Transverse colon (tissue), 4 donors: ENCODE measurements at regions of chr11 and their contacts with region 1.

Region 1: DNA sequence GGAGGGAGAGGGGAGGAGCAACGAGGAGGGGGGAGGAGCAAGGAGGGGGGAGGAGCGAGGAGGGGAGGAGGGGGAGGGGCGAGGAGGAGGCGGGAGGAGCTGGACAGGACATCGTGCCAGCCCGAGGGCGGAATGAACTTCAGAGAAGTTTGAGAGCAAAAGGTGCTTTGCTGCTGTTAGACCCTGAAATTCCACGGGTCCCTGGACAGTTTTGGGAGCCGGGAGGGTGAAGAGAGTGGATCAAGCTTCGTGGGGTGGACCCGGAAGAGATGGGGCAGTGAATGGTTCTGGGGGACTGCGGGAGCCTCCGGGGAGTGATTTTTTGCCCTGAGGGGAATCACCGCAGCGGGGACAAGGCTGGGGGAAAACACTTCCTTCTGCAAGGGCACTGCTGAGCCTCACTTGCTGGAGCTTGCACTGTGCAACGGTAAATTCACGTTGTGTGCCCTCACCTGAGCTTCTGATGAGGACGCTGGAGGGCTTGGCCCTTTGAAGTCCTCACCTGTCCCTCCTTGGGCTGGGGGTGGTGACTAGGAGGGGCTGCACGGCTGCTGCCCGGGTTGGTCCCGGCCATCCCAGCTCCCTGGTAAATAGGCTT is 10.6 kb upstream of the NLRP6 start:
- DNase-seq: peak; percentile 75
- H3K4me3 ChIP-seq: peak overlapping the region; percentile 16 to 38 (median 23)
- H3K27ac ChIP-seq: peak overlapping the region; percentile 79 to 86 (median 84)
- H3K4me1 ChIP-seq: peaks cover 0 to 22% (median 18%) of the 10 kb centered on the region in 4 donors
- H3K27me3 ChIP-seq: peaks cover 7% of the 10 kb centered on the region
- CTCF ChIP-seq: no peak
- EP300 ChIP-seq: no peak
- POLR2A ChIP-seq: peak; percentile 52

Region 2: DNA sequence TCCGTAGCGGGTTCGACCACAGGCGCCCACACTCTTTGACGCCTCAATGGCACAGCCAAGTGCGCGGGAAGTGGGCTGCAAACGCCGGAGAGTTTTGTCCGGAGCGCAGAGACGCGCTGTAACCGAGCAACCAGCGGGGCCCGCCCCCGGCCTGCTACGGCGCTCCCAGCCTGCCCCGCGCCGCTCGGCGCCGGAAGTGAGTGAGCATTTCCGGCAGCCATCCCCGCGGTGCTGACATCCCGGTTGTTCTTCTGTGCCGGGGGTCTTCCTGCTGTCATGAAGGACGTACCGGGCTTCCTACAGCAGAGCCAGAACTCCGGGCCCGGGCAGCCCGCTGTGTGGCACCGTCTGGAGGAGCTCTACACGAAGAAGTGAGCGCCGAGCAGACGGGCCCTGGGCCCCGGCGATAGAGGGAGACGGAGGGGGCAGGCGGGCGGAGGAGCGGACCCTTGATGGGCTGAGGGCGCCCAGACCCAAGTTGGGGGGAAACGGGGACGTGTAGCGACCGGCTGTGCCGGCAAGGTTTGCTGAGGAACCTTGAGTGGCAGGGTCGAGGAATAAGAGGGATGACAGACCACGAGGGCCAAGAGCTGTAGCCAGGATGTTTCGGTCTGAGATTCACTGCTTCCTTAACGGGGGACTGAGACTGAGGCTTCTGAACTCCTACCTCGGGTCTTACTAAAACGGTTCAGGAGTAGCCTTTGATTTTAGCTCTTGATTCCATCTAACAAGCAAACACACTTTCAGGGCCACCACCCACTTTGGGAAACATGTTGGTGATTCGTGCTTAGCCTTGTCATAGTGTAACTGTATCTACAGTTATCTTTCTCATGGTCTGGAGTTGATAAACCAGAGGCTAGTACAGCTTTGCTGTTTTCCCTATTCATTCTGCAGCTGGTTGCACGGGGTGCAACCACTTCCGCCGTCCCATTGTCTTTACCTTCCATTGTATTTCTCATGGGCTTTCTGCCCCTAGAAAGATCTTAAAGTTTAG is 30.5 kb before region 1 on chr11 and contains the start of gene PSMD13:
- in situ Hi-C with region 1: no loop called
- intact Hi-C with region 1: no loop called
- DNase-seq: peak; percentile 89
- H3K4me3 ChIP-seq: peak within 1 kb of the TSS; percentile 68 to 100 (median 92)
- H3K27ac ChIP-seq: peak within 1 kb of the TSS; percentile 94 to 99 (median 98)
- H3K4me1 ChIP-seq: peaks cover 17 to 28% (median 19%) of the 10 kb centered on the region in 4 donors
- H3K27me3 ChIP-seq: no peaks in the 10 kb centered on the region
- CTCF ChIP-seq: peak in 2 of 5 experiments; percentile 29 to 44
- EP300 ChIP-seq: no peak
- POLR2A ChIP-seq: peak; percentile 71
- total RNA-seq, gene PSMD13: 23.2 to 96.5 (median 52.2) TPM

Region 3: DNA sequence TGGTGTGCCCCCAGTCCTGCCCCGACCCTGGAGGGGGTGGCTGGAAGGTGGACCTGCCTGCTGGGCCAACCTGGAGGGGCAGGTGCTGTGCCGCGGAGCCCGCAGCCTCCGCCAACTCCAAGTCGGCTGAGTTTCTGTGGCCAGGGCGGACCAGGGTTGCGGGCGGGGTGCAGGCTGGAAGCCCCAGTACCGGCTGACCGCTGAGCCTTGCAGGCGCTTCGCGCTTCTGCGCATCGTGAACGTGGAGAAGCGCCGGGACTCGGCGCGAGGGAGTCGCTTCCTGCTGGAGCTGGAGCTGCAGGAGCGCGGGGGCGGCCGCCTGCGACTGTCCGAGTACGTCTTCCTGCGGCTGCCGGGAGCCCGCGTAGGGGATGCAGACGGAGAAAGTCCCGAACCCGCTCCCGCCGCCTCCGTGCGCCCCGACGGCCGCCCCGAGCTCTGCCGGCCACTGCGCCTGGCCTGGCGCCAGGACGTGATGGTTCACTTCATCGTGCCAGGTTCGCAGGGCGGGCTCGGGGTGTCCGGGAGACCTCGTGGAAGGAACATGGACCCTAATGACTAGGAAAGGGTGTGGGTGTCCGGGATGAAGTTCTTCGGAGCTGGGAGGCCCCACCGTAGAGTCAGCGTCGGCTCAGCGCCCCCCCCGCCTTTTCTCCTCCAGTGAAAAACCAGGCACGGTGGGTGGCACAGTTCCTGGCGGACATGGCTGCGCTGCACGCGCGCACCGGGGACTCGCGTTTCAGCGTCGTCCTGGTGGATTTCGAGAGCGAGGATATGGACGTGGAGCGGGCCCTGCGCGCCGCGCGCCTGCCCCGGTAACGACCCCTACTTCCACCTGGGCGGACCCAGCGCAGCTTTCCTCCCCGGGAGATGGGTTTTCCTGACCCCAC is 111.9 kb after region 1 on chr11:
- in situ Hi-C with region 1: no loop called
- intact Hi-C with region 1: loop called (anchors 1 kb)
- DNase-seq: no peak
- H3K4me3 ChIP-seq: no peak overlapping the region
- H3K27ac ChIP-seq: no peak overlapping the region
- H3K4me1 ChIP-seq: no peaks in the 10 kb centered on the region
- H3K27me3 ChIP-seq: no peaks in the 10 kb centered on the region
- CTCF ChIP-seq: no peak
- EP300 ChIP-seq: no peak
- POLR2A ChIP-seq: no peak

Region 4: DNA sequence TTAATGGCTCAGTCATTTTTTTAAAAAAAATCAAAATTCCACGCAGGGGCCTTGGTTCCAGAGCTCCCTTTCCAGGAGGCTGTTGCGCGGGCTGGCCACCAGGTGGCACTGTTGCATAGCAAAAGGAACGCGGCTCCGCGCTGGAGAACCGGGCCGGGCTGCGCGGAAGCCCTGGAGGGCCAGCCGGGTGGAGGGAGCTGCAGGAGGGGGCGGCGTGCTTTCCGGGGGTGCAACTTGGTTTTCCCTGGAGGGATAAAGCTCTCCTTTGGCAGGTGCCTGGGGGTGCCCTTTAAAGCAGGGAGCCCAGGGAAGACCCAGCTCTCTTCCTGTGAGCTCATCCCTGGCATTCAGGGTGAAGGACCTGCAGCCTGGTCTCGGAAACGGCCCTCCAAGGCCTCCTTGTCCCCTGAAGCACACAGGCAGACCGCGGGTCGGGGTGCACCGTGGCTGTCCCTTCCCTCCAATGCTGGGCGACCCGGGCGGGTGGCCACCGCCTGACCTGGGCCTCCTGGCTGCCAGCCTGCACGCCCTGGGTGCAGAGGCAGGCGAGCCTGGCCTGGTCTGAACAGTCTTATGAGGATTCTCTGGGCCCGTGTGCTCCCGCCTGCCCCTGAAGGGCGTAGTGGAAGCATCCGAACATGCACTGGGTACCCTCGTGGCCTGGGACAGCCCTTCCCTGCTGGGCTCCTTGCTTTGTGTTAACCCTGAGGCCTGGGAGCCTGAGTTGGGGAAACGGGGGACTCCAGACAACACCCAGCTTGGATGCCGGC is 1385.4 kb after region 1 on chr11:
- in situ Hi-C with region 1: no loop called
- intact Hi-C with region 1: no loop called
- DNase-seq: peak; percentile 77
- H3K4me3 ChIP-seq: no peak overlapping the region
- H3K27ac ChIP-seq: no peak overlapping the region
- H3K4me1 ChIP-seq: peaks cover 0 to 3% (median 0%) of the 10 kb centered on the region in 4 donors
- H3K27me3 ChIP-seq: peaks cover 22% of the 10 kb centered on the region
- CTCF ChIP-seq: peak; percentile 95 to 99 (median 98)
- EP300 ChIP-seq: no peak
- POLR2A ChIP-seq: no peak